Activated T-helper 2 cell treated with anti-CD3 and anti-CD28 coated beads, Interferon-gamma antibody, Interleukin-2, Interleukin-4, amounts not matched to agents 10 μg/mL and 5 μg/mL and 100 μg/mL, durations not matched to agents 14 hours and 24 hours and 36 hours (primary cell): ENCODE measurements at regions of chr11 and their contacts with region 1.

Region 1: GRCh38 chr11:36441610-36442208 is 68.4 kb downstream of the TRAF6 start:
- DNase-seq: no peak
- H3K4me3 Mint-ChIP-seq: no peak overlapping the region
- H3K27ac Mint-ChIP-seq: no peak overlapping the region
- H3K4me1 Mint-ChIP-seq: peaks cover 11% of the 10 kb centered on the region
- H3K27me3 Mint-ChIP-seq: peaks cover 24% of the 10 kb centered on the region

Region 2: DNA sequence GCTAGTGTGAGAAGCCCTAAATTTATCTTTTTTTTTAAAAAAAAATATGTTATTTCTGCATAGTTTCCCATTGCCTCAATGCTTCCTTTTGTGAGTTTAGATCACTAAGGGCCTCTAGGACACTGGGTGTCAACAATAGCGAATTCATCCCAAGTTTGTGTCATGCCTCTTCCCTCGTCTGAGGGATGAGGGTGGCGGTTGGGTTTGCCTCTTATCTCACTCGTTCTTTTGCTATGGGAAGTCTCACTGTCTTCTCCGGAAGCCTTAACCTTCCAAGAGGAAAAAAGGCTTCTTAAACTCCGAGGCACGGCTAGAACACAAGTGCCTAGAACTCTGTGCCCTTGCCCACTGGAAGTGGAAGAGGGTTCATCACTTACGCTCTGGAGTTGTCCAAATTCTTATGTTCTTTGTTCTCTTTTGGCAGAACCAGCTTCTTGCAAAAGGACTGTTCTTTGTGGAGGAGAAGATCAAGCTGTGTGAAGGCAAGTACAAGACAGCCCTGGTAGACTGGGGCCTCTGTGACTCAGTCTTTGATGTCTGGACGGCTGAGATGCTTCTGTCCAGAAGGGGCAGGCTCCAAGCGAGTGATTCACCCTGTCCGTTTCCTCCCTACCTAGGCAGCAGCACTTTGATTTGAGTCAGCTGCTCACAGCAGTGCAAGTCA is 10.1 kb before region 1 on chr11:
- intact Hi-C with region 1: loop called (anchors 1 kb)
- DNase-seq: no peak
- H3K4me3 Mint-ChIP-seq: no peak overlapping the region
- H3K27ac Mint-ChIP-seq: peak overlapping the region; percentile 30
- H3K4me1 Mint-ChIP-seq: peaks cover 12% of the 10 kb centered on the region
- H3K27me3 Mint-ChIP-seq: peaks cover 2% of the 10 kb centered on the region

Region 3: GRCh38 chr11:36460220-36460619 is 18.5 kb after region 1 on chr11:
- intact Hi-C with region 1: no loop called
- DNase-seq: no peak
- H3K4me3 Mint-ChIP-seq: no peak overlapping the region
- H3K27ac Mint-ChIP-seq: no peak overlapping the region
- H3K4me1 Mint-ChIP-seq: peaks cover 7% of the 10 kb centered on the region
- H3K27me3 Mint-ChIP-seq: peaks cover 11% of the 10 kb centered on the region